Dendritic cell treated with granulocyte-macrophage colony-stimulating factor and Interleukin-4, amounts not matched to agents 40 ng/mL and 50 ng/mL, for 4 days (primary cell): ENCODE measurements at regions of chr2 and their contacts with region 1.

Region 1: DNA sequence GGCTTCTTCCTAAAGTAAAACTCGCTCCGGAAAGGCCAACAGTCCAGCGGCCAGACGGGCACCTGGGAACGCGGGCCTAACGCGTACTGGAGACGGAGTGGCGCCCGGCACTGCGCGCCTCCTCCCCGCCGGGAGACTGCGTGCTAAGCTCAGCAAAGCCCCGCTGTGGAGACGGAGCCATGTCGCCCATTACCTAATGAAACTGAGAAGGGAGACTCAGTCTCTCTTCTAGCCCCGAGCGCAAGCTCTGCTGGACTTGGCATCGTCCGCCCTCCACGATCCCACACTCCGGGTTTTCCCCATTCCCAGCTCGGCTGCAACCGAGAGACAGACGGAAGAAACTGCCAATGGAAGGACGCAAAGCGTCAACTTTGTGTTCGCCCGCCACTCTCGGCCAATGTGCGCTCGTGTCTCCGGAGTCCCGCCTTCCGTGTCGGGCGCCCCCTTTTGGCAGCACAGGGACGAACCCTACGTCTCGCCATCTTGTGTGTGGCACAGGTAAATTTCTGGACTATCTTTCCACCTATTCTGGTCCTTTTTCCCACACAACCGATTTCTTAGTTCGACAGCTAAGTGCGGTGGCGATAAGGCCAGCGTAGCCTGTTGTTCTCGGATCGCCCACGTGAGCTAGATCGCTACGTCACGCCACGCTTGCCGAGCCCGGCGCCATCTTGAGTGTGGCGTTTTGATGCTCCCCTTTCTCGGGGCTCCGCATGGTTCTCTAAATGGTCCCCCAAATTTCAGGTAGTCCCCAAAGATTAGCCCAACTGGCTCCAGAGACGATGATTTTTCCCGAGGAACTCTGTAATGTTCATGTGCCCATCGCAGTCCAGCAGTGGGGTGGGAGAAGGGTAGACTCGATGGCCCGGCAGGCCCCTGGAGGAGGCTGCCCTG is 1.3 kb upstream of the PTMA start:
- H3K4me3 Mint-ChIP-seq: peak overlapping the region; percentile 85
- H3K27ac Mint-ChIP-seq: peak overlapping the region; percentile 98
- H3K4me1 Mint-ChIP-seq: peaks cover 22% of the 10 kb centered on the region
- H3K27me3 Mint-ChIP-seq: no peaks in the 10 kb centered on the region

Region 2: GRCh38 chr2:231662028-231662810 is 44.8 kb before region 1 on chr2:
- intact Hi-C with region 1: loop called (anchors 1 kb)
- H3K4me3 Mint-ChIP-seq: peak overlapping the region; percentile 63
- H3K27ac Mint-ChIP-seq: peak overlapping the region; percentile 95
- H3K4me1 Mint-ChIP-seq: peaks cover 26% of the 10 kb centered on the region
- H3K27me3 Mint-ChIP-seq: peaks cover 2% of the 10 kb centered on the region

Region 3: GRCh38 chr2:231732604-231733003 is 25.6 kb after region 1 on chr2:
- intact Hi-C with region 1: no loop called
- H3K4me3 Mint-ChIP-seq: no peak overlapping the region
- H3K27ac Mint-ChIP-seq: no peak overlapping the region
- H3K4me1 Mint-ChIP-seq: peaks cover 3% of the 10 kb centered on the region
- H3K27me3 Mint-ChIP-seq: no peaks in the 10 kb centered on the region

Region 4: GRCh38 chr2:231752061-231752460 is 45.1 kb after region 1 on chr2:
- intact Hi-C with region 1: no loop called
- H3K4me3 Mint-ChIP-seq: no peak overlapping the region
- H3K27ac Mint-ChIP-seq: no peak overlapping the region
- H3K4me1 Mint-ChIP-seq: peaks cover 12% of the 10 kb centered on the region
- H3K27me3 Mint-ChIP-seq: no peaks in the 10 kb centered on the region